ENCODE measurements at regions of chr1 and their contacts with region 1.

Region 1: GRCh38 chr1:15028102-15028501 is 125.4 kb upstream of the TMEM51 start:
- DNase-seq: no peak
- ATAC-seq: no peak
- H3K4me3 Mint-ChIP-seq: no peak overlapping the region
- H3K27ac Mint-ChIP-seq: no peak overlapping the region
- H3K4me1 Mint-ChIP-seq: no peaks in the 10 kb centered on the region
- H3K27me3 Mint-ChIP-seq: no peaks in the 10 kb centered on the region

Region 2: GRCh38 chr1:14778898-14779865 is 248.9 kb before region 1 on chr1:
- CTCF ChIA-PET with region 1: interaction called, 14 read pairs
- POLR2A ChIA-PET with region 1: no interaction called
- DNase-seq: peak; percentile 35
- ATAC-seq: no peak
- H3K4me3 Mint-ChIP-seq: no peak overlapping the region
- H3K27ac Mint-ChIP-seq: no peak overlapping the region
- H3K4me1 Mint-ChIP-seq: peaks cover 13% of the 10 kb centered on the region
- H3K27me3 Mint-ChIP-seq: no peaks in the 10 kb centered on the region

Region 3: DNA sequence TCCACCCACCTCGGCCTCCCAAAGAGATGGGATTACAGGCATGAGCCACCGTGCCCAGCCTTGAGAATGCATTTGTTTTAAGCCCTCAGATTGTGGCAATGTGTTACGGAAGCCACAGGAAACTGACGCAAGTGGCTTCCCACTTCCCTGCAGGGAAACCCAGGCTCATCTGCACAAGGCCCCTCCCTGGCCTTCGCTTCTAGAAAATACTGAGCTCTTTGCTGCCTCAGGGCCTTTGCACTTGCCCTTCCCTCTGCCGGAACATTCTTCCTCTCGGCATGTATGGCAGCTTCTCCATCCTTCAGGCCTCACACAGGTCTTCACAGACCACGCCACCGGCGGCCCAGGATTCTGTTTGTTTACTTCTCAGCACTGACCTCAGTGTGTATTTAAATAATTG is 11.6 kb before region 1 on chr1:
- CTCF ChIA-PET with region 1: interaction called, 10 read pairs
- POLR2A ChIA-PET with region 1: no interaction called
- DNase-seq: peak; percentile 26
- ATAC-seq: no peak
- H3K4me3 Mint-ChIP-seq: no peak overlapping the region
- H3K27ac Mint-ChIP-seq: peak overlapping the region; percentile 15
- H3K4me1 Mint-ChIP-seq: peaks cover 11% of the 10 kb centered on the region
- H3K27me3 Mint-ChIP-seq: no peaks in the 10 kb centered on the region

Region 4: GRCh38 chr1:15038232-15039016 is 10.3 kb after region 1 on chr1:
- CTCF ChIA-PET with region 1: interaction called, 23 read pairs
- POLR2A ChIA-PET with region 1: no interaction called
- DNase-seq: peak; percentile 51
- ATAC-seq: peak; percentile 84
- H3K4me3 Mint-ChIP-seq: no peak overlapping the region
- H3K27ac Mint-ChIP-seq: no peak overlapping the region
- H3K4me1 Mint-ChIP-seq: peaks cover 10% of the 10 kb centered on the region
- H3K27me3 Mint-ChIP-seq: peaks cover 2% of the 10 kb centered on the region

Region 5: GRCh38 chr1:15137809-15138208 is 109.7 kb after region 1 on chr1:
- CTCF ChIA-PET with region 1: no interaction called
- POLR2A ChIA-PET with region 1: no interaction called
- DNase-seq: no peak
- ATAC-seq: no peak
- H3K4me3 Mint-ChIP-seq: no peak overlapping the region
- H3K27ac Mint-ChIP-seq: no peak overlapping the region
- H3K4me1 Mint-ChIP-seq: peaks cover 1% of the 10 kb centered on the region
- H3K27me3 Mint-ChIP-seq: peaks cover 47% of the 10 kb centered on the region